Common myeloid progenitor, CD34-positive (primary cell): ENCODE measurements at regions of chr6 and their contacts with region 1.

Region 1: GRCh38 chr6:149340200-149340599 is 22.7 kb downstream of the TAB2 start:
- DNase-seq: no peak
- H3K4me3 ChIP-seq: no peak overlapping the region
- H3K27ac ChIP-seq: no peak overlapping the region
- H3K4me1 ChIP-seq: peaks cover 22 to 72% (median 32%) of the 10 kb centered on the region in 4 experiments
- H3K27me3 ChIP-seq: no peaks in the 10 kb centered on the region

Region 2: GRCh38 chr6:149012040-149012545 is 328.1 kb before region 1 on chr6:
- CTCF ChIA-PET with region 1: no interaction called
- POLR2A ChIA-PET with region 1: no interaction called
- DNase-seq: no peak
- H3K4me3 ChIP-seq: no peak overlapping the region
- H3K27ac ChIP-seq: no peak overlapping the region
- H3K4me1 ChIP-seq: peaks cover 3 to 17% (median 14%) of the 10 kb centered on the region in 4 experiments
- H3K27me3 ChIP-seq: no peaks in the 10 kb centered on the region

Region 3: GRCh38 chr6:149323353-149323752 is 16.8 kb before region 1 on chr6:
- CTCF ChIA-PET with region 1: interaction called, 11 read pairs
- POLR2A ChIA-PET with region 1: no interaction called
- DNase-seq: no peak
- H3K4me3 ChIP-seq: peak overlapping the region in 3 of 7 experiments; percentile 16 to 39 (median 37)
- H3K27ac ChIP-seq: peak overlapping the region in 1 of 2 experiments; percentile 64
- H3K4me1 ChIP-seq: peaks cover 14 to 54% (median 29%) of the 10 kb centered on the region in 4 experiments
- H3K27me3 ChIP-seq: no peaks in the 10 kb centered on the region